ENCODE measurements at regions of chr2 and their contacts with region 1.

Region 1: GRCh38 chr2:172931918-172932520 is 143.6 kb upstream of the MAP3K20 start:
- DNase-seq: peak in 1 of 2 donors; percentile 76
- H3K4me3 ChIP-seq: peak overlapping the region; percentile 27 to 44
- H3K27ac ChIP-seq: peak overlapping the region; percentile 58 to 62
- H3K4me1 ChIP-seq: peaks cover 2 to 20% of the 10 kb centered on the region in 2 donors
- H3K27me3 ChIP-seq: no peaks in the 10 kb centered on the region
- CTCF ChIP-seq: peak; percentile 26 to 81 (median 75)

Region 2: GRCh38 chr2:172596776-172597175 is 335.2 kb before region 1 on chr2:
- intact Hi-C with region 1: no loop called
- DNase-seq: no peak
- H3K4me3 ChIP-seq: no peak overlapping the region
- H3K27ac ChIP-seq: no peak overlapping the region
- H3K4me1 ChIP-seq: peaks cover 2 to 4% of the 10 kb centered on the region in 2 donors
- H3K27me3 ChIP-seq: no peaks in the 10 kb centered on the region
- CTCF ChIP-seq: no peak

Region 3: DNA sequence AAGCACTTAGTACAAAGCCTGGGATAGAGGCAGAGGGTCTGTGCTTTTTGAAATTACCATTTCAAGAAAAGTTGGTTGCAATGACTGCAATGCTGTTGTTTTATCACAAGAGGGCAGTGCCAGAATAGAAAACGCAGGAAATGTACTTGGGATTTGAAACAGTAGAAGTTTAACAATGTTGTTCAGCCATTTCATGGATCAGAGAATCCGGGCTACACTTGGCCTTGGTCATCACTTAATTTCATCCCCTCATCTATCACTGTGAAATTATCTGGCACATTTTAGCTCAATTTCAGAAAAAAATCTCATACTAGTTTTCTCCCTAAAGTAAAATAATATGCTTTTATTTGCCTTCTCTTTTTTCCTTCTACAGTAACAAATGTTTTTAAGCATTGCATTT is 125.5 kb before region 1 on chr2:
- intact Hi-C with region 1: loop called (anchors 1 kb)
- DNase-seq: no peak
- H3K4me3 ChIP-seq: no peak overlapping the region
- H3K27ac ChIP-seq: no peak overlapping the region
- H3K4me1 ChIP-seq: no peaks in the 10 kb centered on the region
- H3K27me3 ChIP-seq: no peaks in the 10 kb centered on the region
- CTCF ChIP-seq: peak; percentile 58 to 88 (median 77)

Region 4: DNA sequence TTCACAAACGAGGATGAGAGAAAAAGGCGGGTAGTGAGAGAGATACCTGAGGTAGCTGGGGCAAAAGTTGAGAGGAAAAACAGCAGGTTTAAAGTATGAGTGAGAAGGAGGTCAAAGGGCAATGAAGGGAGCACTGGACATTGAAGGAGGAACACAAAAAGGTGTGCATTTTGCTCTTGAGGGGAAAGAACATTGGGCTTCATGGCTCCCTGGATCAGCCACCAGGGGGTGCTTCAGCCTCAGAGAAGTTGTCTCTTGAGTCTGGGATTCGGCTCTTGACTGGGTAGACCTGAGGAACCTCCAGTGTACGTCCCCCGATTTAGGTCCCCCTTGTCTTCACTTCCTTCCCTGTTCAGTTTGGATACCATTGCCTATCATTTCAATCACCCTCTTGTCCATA is 67.8 kb before region 1 on chr2:
- intact Hi-C with region 1: loop called (anchors 1 kb)
- DNase-seq: no peak
- H3K4me3 ChIP-seq: no peak overlapping the region
- H3K27ac ChIP-seq: no peak overlapping the region
- H3K4me1 ChIP-seq: no peaks in the 10 kb centered on the region
- H3K27me3 ChIP-seq: no peaks in the 10 kb centered on the region
- CTCF ChIP-seq: peak; percentile 42 to 66 (median 64)

Region 5: DNA sequence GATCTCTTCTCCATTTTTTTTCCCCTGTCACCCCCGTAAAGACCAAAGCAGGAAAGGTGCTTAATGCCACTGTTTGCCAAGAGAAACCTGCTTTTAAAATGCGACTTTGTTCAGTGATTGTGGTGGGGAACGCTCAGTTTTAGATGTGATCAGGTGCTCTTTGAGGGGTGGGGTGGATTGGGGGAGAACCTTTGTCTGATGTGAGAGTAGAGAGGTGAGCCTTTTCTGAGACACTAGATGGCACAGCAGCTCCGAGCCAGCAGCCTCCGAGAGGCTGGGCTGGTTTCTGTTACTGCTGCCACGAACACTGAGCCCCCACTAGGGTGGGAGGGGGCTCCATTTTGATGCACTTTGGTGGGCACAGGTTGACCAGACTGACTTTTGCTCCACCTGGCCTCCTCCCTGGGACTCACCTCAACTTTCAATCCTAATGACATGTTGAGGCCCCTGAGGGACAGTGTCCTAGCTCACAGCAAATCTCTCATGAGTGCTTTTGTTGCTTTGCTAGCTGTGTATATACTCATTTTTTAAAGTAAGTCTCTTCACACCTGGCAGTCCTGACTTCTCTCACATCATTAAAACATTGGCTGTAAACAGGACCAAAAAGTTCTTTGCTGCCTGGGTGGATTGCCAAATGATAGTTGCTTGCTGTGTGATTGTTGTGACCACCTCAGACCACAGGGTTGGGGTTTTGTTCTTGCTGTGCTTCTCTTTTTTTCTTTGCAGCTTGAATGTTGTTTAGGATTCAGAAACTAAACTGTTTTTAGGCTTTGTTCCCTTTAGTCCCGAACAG is 45.4 kb after region 1 on chr2:
- intact Hi-C with region 1: no loop called
- DNase-seq: no peak
- H3K4me3 ChIP-seq: no peak overlapping the region
- H3K27ac ChIP-seq: no peak overlapping the region
- H3K4me1 ChIP-seq: no peaks in the 10 kb centered on the region
- H3K27me3 ChIP-seq: no peaks in the 10 kb centered on the region
- CTCF ChIP-seq: no peak